ENCODE measurements at regions of chr11 and their contacts with region 1.

Region 1: DNA sequence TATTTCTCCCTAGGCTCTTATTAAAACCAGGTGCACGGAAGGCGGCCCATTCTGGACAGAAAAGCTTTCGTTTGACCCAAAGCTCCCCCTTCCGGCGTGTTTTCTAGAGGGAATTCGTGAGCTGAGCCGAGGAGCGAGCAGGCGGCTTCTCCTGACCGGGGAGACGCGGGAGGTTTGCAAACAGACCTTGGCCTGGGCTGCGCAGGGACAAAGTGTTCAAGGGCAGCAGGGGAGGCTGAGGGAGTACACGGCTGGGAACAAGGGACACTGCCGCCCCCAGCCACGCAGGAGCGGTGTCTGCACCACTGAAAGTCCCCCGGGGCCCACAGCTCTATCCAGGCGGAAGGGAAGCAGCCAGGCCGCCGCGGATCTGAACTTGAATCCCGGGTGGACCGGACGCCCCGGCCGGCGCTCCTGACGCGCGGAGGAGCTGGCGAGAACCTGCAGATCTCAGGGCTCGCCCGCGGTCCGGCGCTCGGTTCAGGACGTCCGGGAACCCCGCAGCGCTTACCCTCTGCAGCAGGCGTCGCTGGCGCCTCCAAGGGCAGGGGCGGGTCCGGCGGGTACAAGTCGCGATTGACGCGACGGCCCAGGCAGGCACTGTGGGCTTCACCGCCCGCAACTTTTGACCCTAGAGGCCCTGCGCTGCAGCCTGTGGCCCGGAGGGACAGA is 101.9 kb downstream of the WT1 start:
- DNase-seq: no peak
- H3K4me3 ChIP-seq: peak overlapping the region; percentile 38
- H3K27me3 ChIP-seq: peaks cover 2% of the 10 kb centered on the region
- CTCF ChIP-seq: peak; percentile 60

Region 2: DNA sequence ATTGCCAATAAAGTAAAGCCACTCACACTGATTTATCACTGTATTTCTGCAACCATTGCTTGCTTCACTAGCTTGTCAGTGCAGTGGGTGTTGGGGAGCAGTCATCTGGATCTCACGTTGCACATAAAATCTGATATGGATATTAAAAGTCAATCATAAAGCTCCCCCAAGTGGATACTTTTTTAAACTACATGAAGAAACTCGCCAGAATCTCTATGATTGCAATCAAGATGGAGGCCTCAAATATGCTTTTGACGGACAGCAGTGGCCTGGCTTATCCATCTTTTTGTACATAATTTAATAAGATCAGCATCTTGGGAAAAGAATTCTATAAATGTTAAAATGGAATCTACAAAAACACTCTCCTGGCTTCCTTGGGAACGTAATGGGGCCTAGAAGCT is 35.8 kb before region 1 on chr11:
- CTCF ChIA-PET with region 1: no interaction called
- POLR2A ChIA-PET with region 1: interaction called, 15 read pairs
- DNase-seq: no peak
- H3K4me3 ChIP-seq: no peak overlapping the region
- H3K27me3 ChIP-seq: 0 out of 2 replicates have a peak, but pooled peaks cover 3% of the 10 kb centered on the region
- CTCF ChIP-seq: no peak

Region 3: GRCh38 chr11:32549611-32550187 is 216.2 kb after region 1 on chr11:
- CTCF ChIA-PET with region 1: no interaction called
- POLR2A ChIA-PET with region 1: no interaction called
- DNase-seq: no peak
- H3K4me3 ChIP-seq: no peak overlapping the region
- H3K27me3 ChIP-seq: no peaks in the 10 kb centered on the region
- CTCF ChIP-seq: no peak

Measured in BJ (cell line).